Prostate gland (tissue), 2 donors: ENCODE measurements at regions of chr15 and their contacts with region 1.

Region 1: GRCh38 chr15:40081691-40082194 is 26.9 kb downstream of the BMF start:
- DNase-seq: peak; percentile 50
- H3K4me3 ChIP-seq: peak overlapping the region; percentile 9 to 12
- H3K27ac ChIP-seq: peak overlapping the region; percentile 57 to 66
- H3K4me1 ChIP-seq: no peaks in the 10 kb centered on the region
- H3K27me3 ChIP-seq: no peaks in the 10 kb centered on the region
- CTCF ChIP-seq: no peak
- POLR2A ChIP-seq: peak; percentile 25

Region 2: GRCh38 chr15:39817892-39818291 is 263.9 kb before region 1 on chr15:
- intact Hi-C with region 1: no loop called
- DNase-seq: no peak
- H3K4me3 ChIP-seq: no peak overlapping the region
- H3K27ac ChIP-seq: no peak overlapping the region
- H3K4me1 ChIP-seq: no peaks in the 10 kb centered on the region
- H3K27me3 ChIP-seq: no peaks in the 10 kb centered on the region
- CTCF ChIP-seq: no peak
- POLR2A ChIP-seq: no peak

Region 3: DNA sequence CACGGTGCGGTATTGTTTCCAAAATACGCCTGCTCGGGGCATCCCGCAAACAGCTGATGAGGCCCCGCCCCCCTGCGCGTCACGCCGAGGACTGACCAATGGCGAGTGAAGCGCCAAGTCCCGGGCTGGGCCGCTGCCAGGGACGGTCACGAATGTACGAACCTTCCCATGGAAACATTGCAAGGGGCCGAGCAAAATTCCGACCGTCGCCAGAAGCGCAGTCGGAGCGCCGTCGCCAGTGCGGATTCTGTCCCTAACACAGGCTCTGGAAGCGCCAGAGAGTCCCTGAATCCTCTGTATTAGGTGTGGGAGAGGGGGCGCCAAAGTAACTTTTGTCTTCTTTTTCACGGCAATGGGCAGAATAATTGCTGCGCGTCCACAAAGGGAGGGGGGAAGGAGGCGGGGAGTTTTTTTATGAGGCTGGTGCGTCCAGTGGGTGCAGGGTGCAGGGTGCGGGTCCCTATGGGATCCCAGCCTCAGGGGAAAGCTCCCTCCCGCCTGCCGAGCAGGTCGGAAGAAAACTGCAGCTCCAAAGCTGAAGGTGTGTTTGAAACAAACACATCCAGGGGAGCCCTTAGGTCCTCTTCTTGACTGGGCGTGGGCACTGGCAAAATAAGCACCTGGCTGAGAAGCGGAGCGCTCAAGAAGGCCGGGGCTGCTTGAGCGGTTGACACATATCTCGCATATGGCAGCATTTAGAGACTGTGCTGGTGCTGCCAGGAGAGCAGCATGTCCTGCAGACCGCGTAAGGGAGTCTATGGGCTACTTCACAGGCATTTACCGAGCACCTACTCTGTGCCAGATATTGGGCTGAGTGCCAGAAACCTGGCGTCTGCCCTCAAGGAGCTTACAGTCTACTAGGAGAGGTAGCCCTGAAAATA is 27.4 kb after region 1 on chr15 and contains the start of gene BMF:
- intact Hi-C with region 1: loop called (anchors 1 kb)
- DNase-seq: peak; percentile 100
- H3K4me3 ChIP-seq: peak within 1 kb of the TSS; percentile 93 to 96
- H3K27ac ChIP-seq: peak within 1 kb of the TSS; percentile 85 to 93
- H3K4me1 ChIP-seq: peaks cover 35% of the 10 kb centered on the region
- H3K27me3 ChIP-seq: no peaks in the 10 kb centered on the region
- CTCF ChIP-seq: peak in 2 of 4 experiments; percentile 49 to 52
- POLR2A ChIP-seq: peak; percentile 95
- total RNA-seq, gene BMF: 8.8 to 19.0 TPM